HAP-1 (cell line): ENCODE measurements at regions of chr9 and their contacts with region 1.

Region 1: GRCh38 chr9:105141146-105141975 is 103.1 kb upstream of the SLC44A1 start:
- DNase-seq: no peak
- H3K4me3 ChIP-seq: no peak overlapping the region
- H3K4me1 ChIP-seq: peaks cover 22% of the 10 kb centered on the region
- H3K27me3 ChIP-seq: no peaks in the 10 kb centered on the region

Region 2: DNA sequence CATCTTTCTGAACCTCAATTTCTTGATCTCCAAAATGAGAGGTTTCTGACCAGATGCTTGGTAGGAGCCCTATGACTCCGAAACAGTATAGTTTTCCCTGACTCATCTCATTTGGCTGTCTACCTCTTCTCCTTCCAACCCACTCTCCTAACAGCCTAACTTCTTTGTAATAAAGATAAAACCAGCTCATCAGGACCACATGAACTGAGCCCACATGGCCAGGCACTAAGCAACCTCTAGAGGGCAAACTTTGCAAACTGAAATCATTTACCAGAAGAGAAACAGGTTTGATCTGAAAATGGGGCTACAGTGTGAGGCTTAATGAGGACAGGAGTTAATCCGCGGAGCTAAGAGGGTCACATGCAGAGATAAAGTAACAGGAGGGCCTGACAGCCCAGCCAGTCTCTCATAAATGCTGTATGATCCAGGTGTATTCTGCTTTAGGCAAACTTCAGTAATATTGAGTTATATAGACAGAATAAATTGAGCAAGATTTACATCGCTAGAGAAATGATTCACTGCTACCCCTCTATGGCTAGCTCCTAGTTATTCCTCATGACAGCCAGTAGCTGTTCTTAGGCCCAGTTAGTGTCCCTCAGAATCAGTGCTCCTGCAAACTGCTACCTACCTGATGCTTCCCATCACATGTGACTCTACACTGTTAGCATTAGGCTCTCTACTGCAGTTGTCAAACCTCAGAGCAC is 278.0 kb before region 1 on chr9:
- in situ Hi-C with region 1: loop called (anchors 10 kb)
- DNase-seq: peak; percentile 73 to 88
- H3K4me3 ChIP-seq: no peak overlapping the region
- H3K4me1 ChIP-seq: peaks cover 17% of the 10 kb centered on the region
- H3K27me3 ChIP-seq: no peaks in the 10 kb centered on the region

Region 3: GRCh38 chr9:105087910-105088888 is 53.2 kb before region 1 on chr9:
- in situ Hi-C with region 1: no loop called
- DNase-seq: no peak
- H3K4me3 ChIP-seq: no peak overlapping the region
- H3K4me1 ChIP-seq: no peaks in the 10 kb centered on the region
- H3K27me3 ChIP-seq: no peaks in the 10 kb centered on the region

Region 4: GRCh38 chr9:105447814-105448812 is 306.8 kb after region 1 on chr9 and contains the start of gene FSD1L:
- in situ Hi-C with region 1: no loop called
- DNase-seq: peak; percentile 95 to 97
- H3K4me3 ChIP-seq: peak within 1 kb of the TSS; percentile 76
- H3K4me1 ChIP-seq: peaks cover 17% of the 10 kb centered on the region
- H3K27me3 ChIP-seq: no peaks in the 10 kb centered on the region